ENCODE measurements at regions of chr3 and their contacts with region 1.

Region 1: GRCh38 chr3:42024591-42025351 is 62.9 kb upstream of the ULK4 start:
- DNase-seq: no peak
- ATAC-seq: no peak
- H3K4me3 Mint-ChIP-seq: no peak overlapping the region
- H3K27ac Mint-ChIP-seq: no peak overlapping the region
- H3K4me1 Mint-ChIP-seq: peaks cover 67% of the 10 kb centered on the region
- H3K27me3 Mint-ChIP-seq: no peaks in the 10 kb centered on the region
- CTCF ChIP-seq: no peak

Region 2: GRCh38 chr3:42005401-42005800 is 19.4 kb before region 1 on chr3:
- CTCF ChIA-PET with region 1: no interaction called
- POLR2A ChIA-PET with region 1: no interaction called
- intact Hi-C with region 1: no loop called
- DNase-seq: no peak
- ATAC-seq: no peak
- H3K4me3 Mint-ChIP-seq: no peak overlapping the region
- H3K27ac Mint-ChIP-seq: no peak overlapping the region
- H3K4me1 Mint-ChIP-seq: no peaks in the 10 kb centered on the region
- H3K27me3 Mint-ChIP-seq: no peaks in the 10 kb centered on the region
- CTCF ChIP-seq: no peak

Region 3: DNA sequence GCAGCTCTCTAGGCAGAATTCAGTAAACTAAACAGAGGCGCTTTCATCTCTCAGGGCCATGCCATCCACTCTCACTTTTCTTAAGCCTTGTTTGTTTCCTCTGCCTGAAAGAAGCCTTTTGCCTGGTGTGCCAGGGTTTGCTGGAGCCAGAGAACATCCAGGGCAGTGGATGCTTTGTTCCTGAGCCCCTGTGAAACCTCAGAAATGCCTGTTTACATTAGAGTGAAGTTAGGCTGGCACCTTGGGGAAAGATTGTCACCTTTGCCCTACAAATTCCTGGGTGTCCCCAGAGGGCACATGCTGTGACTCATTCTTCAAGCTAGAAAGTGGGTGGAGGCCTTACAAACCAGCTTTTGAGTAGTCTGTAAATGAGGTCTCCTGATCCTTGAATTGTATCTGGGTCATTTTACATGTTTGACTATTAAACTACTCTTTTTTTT is 55.7 kb after region 1 on chr3:
- CTCF ChIA-PET with region 1: interaction called, 3 read pairs
- POLR2A ChIA-PET with region 1: no interaction called
- intact Hi-C with region 1: loop called (anchors 5 kb)
- DNase-seq: peak; percentile 52
- ATAC-seq: peak; percentile 88
- H3K4me3 Mint-ChIP-seq: no peak overlapping the region
- H3K27ac Mint-ChIP-seq: peak overlapping the region; percentile 82
- H3K4me1 Mint-ChIP-seq: peaks cover 53% of the 10 kb centered on the region
- H3K27me3 Mint-ChIP-seq: no peaks in the 10 kb centered on the region
- CTCF ChIP-seq: no peak